IMR-90 (cell line): ENCODE measurements at regions of chr6 and their contacts with region 1.

Region 1: GRCh38 chr6:167212713-167213005 is 54.9 kb upstream of the GPR31 start:
- DNase-seq: no peak
- ATAC-seq: no peak
- H3K4me3 ChIP-seq: no peak overlapping the region
- H3K27ac ChIP-seq: no peak overlapping the region
- H3K4me1 ChIP-seq: no peaks in the 10 kb centered on the region
- H3K27me3 ChIP-seq: no peaks in the 10 kb centered on the region
- CTCF ChIP-seq: no peak
- POLR2A ChIP-seq: no peak
- RAD21 ChIP-seq: no peak

Region 2: GRCh38 chr6:167005350-167006159 is 207.1 kb before region 1 on chr6:
- CTCF ChIA-PET with region 1: no interaction called
- POLR2A ChIA-PET with region 1: no interaction called
- dilution Hi-C with region 1: no loop called
- in situ Hi-C with region 1: no loop called
- intact Hi-C with region 1: no loop called
- DNase-seq: no peak
- ATAC-seq: no peak
- H3K4me3 ChIP-seq: no peak overlapping the region
- H3K27ac ChIP-seq: no peak overlapping the region
- H3K4me1 ChIP-seq: peaks cover 3% of the 10 kb centered on the region; the same call in 1 of the 2 replicates
- H3K27me3 ChIP-seq: no peaks in the 10 kb centered on the region
- CTCF ChIP-seq: no peak
- POLR2A ChIP-seq: no peak
- RAD21 ChIP-seq: no peak

Region 3: GRCh38 chr6:167153521-167153959 is 59.1 kb before region 1 on chr6:
- CTCF ChIA-PET with region 1: no interaction called
- POLR2A ChIA-PET with region 1: no interaction called
- dilution Hi-C with region 1: no loop called
- in situ Hi-C with region 1: no loop called
- intact Hi-C with region 1: no loop called
- DNase-seq: peak; percentile 5
- ATAC-seq: no peak
- H3K4me3 ChIP-seq: no peak overlapping the region
- H3K27ac ChIP-seq: no peak overlapping the region
- H3K4me1 ChIP-seq: no peaks in the 10 kb centered on the region
- H3K27me3 ChIP-seq: no peaks in the 10 kb centered on the region
- CTCF ChIP-seq: no peak
- POLR2A ChIP-seq: no peak
- RAD21 ChIP-seq: no peak

Region 4: DNA sequence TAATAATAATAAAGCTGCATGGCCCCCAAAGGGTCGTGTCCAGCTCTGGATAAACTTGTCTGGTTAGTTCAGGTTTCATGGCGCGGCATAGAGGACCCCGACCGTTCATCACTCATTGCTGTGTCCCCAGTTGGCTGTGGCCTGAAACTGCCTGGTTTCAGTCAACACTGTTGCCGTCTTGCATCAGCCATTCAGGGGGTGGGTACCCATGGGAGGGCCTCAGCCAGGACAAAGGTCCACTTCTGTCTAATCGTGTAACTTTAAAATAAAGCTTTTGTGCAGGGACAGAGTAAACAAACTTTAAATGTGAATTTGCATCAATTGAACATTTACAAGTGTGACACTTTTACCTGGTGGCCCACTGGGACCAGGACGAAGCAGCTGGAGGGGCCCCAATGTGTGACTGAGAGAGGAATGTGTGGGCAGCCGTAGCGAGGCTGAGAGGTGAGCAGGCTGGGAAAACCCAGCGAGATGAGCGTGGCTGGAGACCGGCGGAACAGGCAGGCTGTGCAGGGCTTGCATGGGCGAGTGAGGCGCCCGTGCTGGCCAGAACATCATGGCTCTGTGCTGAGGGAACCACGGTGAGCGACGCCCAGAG is 56.1 kb after region 1 on chr6:
- CTCF ChIA-PET with region 1: no interaction called
- POLR2A ChIA-PET with region 1: no interaction called
- dilution Hi-C with region 1: no loop called
- in situ Hi-C with region 1: no loop called
- intact Hi-C with region 1: no loop called
- DNase-seq: no peak
- ATAC-seq: no peak
- H3K4me3 ChIP-seq: no peak overlapping the region
- H3K27ac ChIP-seq: no peak overlapping the region
- H3K4me1 ChIP-seq: no peaks in the 10 kb centered on the region
- H3K27me3 ChIP-seq: no peaks in the 10 kb centered on the region
- CTCF ChIP-seq: no peak
- POLR2A ChIP-seq: no peak
- RAD21 ChIP-seq: no peak

Region 5: DNA sequence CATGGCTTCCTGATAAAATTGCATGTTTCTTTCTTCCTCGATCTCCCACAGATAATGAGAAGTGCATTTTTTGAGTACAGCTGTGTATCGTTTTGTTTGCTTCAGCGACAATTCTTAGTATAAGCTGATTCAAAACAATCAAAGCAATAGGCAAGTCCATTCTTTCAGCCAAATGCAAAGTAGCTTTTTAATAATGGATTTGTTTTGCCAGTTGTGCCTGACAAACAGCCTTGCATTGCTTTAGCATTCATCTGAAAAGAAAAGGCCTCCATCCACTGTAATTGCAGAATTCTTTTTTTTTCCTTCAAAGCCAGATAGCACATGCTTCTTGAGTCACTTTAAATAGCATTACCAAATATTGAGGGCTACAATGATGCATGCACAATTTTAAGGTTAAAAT is 144.2 kb after region 1 on chr6:
- CTCF ChIA-PET with region 1: no interaction called
- POLR2A ChIA-PET with region 1: no interaction called
- dilution Hi-C with region 1: no loop called
- in situ Hi-C with region 1: loop called (anchors 10 kb)
- intact Hi-C with region 1: no loop called
- DNase-seq: no peak
- ATAC-seq: no peak
- H3K4me3 ChIP-seq: no peak overlapping the region
- H3K27ac ChIP-seq: no peak overlapping the region
- H3K4me1 ChIP-seq: no peaks in the 10 kb centered on the region
- H3K27me3 ChIP-seq: no peaks in the 10 kb centered on the region
- CTCF ChIP-seq: no peak
- POLR2A ChIP-seq: no peak
- RAD21 ChIP-seq: no peak